ENCODE measurements at regions of chr1 and their contacts with region 1.

Region 1: DNA sequence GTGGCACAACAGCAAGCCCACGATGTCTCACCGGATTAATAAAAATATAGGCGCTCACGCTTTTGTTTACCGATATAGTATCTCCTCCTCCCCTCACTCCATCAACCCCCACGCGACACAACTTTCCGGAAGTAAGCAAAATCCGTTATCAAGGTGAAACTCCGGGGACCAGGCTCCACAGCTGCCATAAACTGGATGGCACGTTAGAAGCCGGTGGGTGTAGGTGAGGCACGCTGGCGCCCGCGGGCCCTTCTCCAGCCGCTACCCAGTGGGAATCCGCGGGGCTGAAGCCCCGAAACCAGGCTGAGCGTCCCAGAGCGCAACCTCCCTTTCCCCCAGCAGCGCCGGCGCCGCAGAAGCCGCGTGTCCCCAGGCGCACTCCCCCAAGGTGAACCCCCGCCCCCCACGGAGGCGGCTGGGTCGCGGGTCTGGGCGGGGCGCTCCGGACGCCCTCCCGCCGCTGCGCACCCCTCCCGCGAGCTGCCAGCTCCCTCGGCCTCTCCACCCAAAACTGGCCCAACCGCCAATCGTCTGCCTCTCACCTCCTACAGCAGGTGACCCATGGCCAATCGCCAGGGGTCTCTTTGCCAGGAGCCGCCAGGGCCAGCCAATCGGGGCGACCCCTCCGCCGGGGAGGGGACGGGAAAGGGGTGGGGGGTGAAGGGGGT is 112.4 kb downstream of the OSBPL9 start:
- DNase-seq: peak; percentile 95

Region 2: GRCh38 chr1:51070640-51071039 is 658.6 kb before region 1 on chr1:
- intact Hi-C with region 1: no loop called
- DNase-seq: no peak

Region 3: GRCh38 chr1:51616901-51617708 is 112.2 kb before region 1 on chr1 and contains the start of gene OSBPL9:
- intact Hi-C with region 1: loop called (anchors 5 kb)
- DNase-seq: peak; percentile 97
- total RNA-seq, gene OSBPL9: 48.7 TPM

Region 4: GRCh38 chr1:51661081-51661518 is 68.2 kb before region 1 on chr1:
- intact Hi-C with region 1: loop called (anchors 5 kb)
- DNase-seq: no peak

Region 5: DNA sequence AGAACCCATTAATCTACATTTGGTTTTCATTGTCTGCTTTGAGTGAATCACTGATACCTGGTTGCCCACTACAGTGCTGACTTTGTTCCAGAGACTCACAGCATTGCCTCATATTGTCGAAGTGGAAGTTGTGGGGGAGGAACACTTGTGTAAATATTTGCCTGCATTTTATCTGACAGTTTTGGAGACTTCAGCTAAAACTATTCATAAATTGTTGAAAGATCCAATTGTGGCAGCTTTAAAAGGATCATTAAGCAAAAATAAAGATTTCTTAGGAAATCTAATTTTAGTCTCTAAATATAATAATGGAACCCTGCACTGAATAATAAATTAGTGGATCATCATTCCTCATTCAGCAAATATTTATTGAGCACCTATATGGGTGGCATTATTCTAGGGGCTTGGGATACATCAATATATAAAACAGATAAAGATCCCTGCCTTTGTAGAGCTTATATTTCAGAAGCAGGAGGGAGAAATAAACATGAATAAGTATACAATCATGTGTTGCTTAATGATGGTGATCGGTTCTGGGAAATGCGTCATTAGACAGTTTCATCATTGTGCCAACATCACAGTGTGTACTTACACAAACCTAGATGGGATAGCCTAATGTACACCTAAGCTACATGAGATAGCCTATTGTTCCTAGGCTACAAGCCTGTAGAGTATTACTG is 38.9 kb before region 1 on chr1:
- intact Hi-C with region 1: loop called (anchors 5 kb)
- DNase-seq: no peak

Region 6: DNA sequence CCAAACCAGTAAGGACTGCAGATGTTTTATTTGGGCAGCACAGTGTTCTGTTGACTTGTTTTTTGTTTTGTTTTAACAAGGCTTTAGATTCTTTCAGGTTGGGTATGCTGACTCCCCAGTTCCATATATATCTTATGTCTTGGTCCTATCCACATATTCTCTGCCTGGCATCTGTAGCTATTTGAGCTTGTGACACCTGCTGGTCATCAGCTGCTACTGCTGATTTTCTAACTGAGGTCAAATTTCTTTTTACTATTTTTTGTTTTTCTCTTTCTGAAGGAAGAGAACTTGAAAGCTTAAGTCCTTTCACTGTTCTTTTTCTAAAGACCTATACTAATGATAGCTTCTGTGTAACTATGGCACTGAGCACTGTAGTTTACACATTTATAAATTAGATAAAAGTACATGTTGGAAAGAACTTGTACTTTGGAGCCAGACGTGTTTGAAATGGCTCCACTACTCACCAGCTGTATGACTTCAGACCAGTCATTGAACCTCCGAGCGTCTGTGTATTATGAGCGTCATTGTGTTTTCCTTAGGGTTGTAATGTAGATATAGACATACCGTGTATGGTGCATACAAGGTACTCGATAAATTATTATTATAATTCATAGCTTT is 39.8 kb after region 1 on chr1:
- intact Hi-C with region 1: loop called (anchors 5 kb)
- DNase-seq: no peak

Region 7: DNA sequence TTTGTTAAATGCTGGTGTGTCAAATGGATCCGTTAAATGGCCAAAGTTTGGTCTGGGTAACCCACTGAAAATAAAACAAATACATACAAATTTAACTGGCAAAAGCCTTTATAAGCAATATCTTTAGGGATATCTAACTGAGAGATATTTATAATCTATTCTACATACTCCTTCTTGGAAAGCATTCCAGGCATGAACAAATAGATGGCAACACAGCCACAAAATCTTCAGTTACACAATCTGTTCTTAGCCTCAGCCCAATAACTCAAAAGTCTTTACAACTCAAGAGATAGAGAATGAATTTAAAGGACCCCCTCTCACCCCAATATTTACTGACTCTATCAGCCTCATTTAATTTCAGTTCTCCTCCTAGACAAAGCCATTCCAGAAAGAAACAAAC is 90.5 kb after region 1 on chr1:
- intact Hi-C with region 1: no loop called
- DNase-seq: no peak